Activated T-helper 1 cell treated with anti-CD3 and anti-CD28 coated beads, Interleukin-12 subunit alpha, Interleukin-12 subunit beta, Interleukin-2, Interleukin-4 antibody, amounts not matched to agents 30 ng/mL and 10 ng/mL and 1 ng/mL, durations not matched to agents 14 hours and 24 hours and 36 hours (primary cell): ENCODE measurements at regions of chr12 and their contacts with region 1.

Region 1: GRCh38 chr12:76878899-76879709 is at the start of gene CSRP2:
- DNase-seq: peak; percentile 57
- H3K4me3 Mint-ChIP-seq: peak within 1 kb of the TSS; percentile 91
- H3K27ac Mint-ChIP-seq: peak within 1 kb of the TSS; percentile 27
- H3K4me1 Mint-ChIP-seq: peaks cover 15% of the 10 kb centered on the region
- H3K27me3 Mint-ChIP-seq: peaks cover 58% of the 10 kb centered on the region
- total RNA-seq, gene CSRP2: 0.36 and 0.96 TPM in 2 replicates

Region 2: GRCh38 chr12:76763743-76764675 is 115.1 kb before region 1 on chr12 and contains the start of gene ZDHHC17:
- intact Hi-C with region 1: loop called (anchors 1 kb)
- DNase-seq: peak; percentile 91
- H3K4me3 Mint-ChIP-seq: peak within 1 kb of the TSS; percentile 98
- H3K27ac Mint-ChIP-seq: peak within 1 kb of the TSS; percentile 94
- H3K4me1 Mint-ChIP-seq: peaks cover 19% of the 10 kb centered on the region
- H3K27me3 Mint-ChIP-seq: peaks cover 3% of the 10 kb centered on the region
- total RNA-seq, gene ZDHHC17: 23.3 and 32.3 TPM in 2 replicates

Region 3: DNA sequence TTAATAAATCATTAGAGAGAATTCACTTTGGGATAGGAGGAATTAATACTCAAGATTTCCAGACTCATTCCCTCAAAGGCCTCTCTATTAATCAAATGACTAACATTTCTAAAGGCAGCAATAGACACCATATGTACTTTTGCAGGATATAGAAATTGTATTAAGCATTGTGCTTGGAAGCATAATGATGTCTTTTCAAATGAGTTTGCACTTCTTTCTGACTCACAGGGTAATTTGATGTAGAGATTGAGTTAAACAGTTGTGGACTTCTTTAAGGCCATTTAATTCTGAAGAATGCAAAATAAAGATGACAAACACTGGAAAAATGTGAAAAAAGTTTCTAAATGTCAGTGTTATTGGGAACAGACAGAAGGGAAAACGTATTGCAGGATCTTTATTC is 63.2 kb after region 1 on chr12:
- intact Hi-C with region 1: no loop called
- DNase-seq: no peak
- H3K4me3 Mint-ChIP-seq: no peak overlapping the region
- H3K27ac Mint-ChIP-seq: no peak overlapping the region
- H3K4me1 Mint-ChIP-seq: no peaks in the 10 kb centered on the region
- H3K27me3 Mint-ChIP-seq: peaks cover 6% of the 10 kb centered on the region

Region 4: DNA sequence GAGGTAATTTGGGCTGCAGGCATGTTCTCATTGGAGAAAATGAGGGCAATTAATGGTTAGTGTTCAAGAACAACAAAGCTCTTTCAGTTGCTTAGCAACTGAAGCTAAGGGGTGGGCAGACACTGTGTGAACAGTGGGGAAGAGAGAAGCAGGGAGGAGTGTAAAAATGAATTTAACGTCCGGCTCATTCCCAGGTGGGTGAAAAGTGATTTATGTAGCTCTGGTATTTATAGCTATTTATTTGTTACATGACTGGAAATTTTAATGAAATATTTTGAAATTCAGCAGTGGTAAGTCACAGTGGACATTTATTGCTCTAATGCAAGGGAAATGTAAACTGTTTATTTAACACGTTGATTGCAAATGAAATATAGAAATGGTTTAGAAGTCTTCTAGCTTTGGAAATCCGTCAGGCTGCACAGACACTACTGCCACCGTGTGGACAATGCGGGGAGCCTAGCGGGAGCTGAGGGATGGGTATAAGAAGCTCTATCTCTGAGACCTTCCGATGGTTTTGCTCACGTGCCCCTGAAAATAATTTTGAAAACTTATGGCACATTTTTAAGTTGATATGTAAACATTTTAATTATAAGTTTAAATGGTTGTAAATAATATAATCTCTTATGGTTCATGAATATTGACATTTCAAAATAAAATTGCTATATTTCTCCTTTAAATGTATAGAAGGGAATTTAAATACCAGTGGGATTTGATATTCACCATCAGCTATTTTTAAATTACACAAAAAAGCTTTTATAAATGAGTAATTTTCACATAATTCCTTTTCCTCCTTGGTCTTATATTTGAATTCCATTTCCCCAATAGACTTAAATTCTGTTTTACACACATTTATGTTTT is 131.8 kb after region 1 on chr12:
- intact Hi-C with region 1: loop called (anchors 10 kb)
- DNase-seq: peak; percentile 42
- H3K4me3 Mint-ChIP-seq: no peak overlapping the region
- H3K27ac Mint-ChIP-seq: no peak overlapping the region
- H3K4me1 Mint-ChIP-seq: peaks cover 5% of the 10 kb centered on the region
- H3K27me3 Mint-ChIP-seq: peaks cover 27% of the 10 kb centered on the region

Region 5: GRCh38 chr12:77065361-77066204 is 186.5 kb after region 1 on chr12 and contains the start of gene E2F7:
- intact Hi-C with region 1: loop called (anchors 5 kb)
- DNase-seq: peak; percentile 87
- H3K4me3 Mint-ChIP-seq: peak within 1 kb of the TSS; percentile 94
- H3K27ac Mint-ChIP-seq: peak within 1 kb of the TSS; percentile 73
- H3K4me1 Mint-ChIP-seq: peaks cover 42% of the 10 kb centered on the region
- H3K27me3 Mint-ChIP-seq: peaks cover 12% of the 10 kb centered on the region
- total RNA-seq, gene E2F7: 16.6 and 16.9 TPM in 2 replicates

Region 6: GRCh38 chr12:77354766-77355362 is 475.8 kb after region 1 on chr12:
- intact Hi-C with region 1: no loop called
- DNase-seq: no peak
- H3K4me3 Mint-ChIP-seq: no peak overlapping the region
- H3K27ac Mint-ChIP-seq: no peak overlapping the region
- H3K4me1 Mint-ChIP-seq: no peaks in the 10 kb centered on the region
- H3K27me3 Mint-ChIP-seq: no peaks in the 10 kb centered on the region